ENCODE measurements at regions of chr19 and their contacts with region 1.

Region 1: GRCh38 chr19:49817964-49818648 is at the start of gene MED25:
- DNase-seq: peak; percentile 88
- H3K4me3 Mint-ChIP-seq: peak within 1 kb of the TSS; percentile 94
- H3K27ac Mint-ChIP-seq: peak within 1 kb of the TSS; percentile 93
- H3K4me1 Mint-ChIP-seq: peaks cover 25% of the 10 kb centered on the region
- H3K27me3 Mint-ChIP-seq: no peaks in the 10 kb centered on the region
- total RNA-seq, gene MED25: 54.2 and 54.5 TPM in 2 replicates

Region 2: GRCh38 chr19:49497047-49497788 is 320.9 kb before region 1 on chr19:
- intact Hi-C with region 1: loop called (anchors 5 kb)
- DNase-seq: peak; percentile 65
- H3K4me3 Mint-ChIP-seq: peak overlapping the region; percentile 91
- H3K27ac Mint-ChIP-seq: peak overlapping the region; percentile 94
- H3K4me1 Mint-ChIP-seq: peaks cover 64% of the 10 kb centered on the region
- H3K27me3 Mint-ChIP-seq: no peaks in the 10 kb centered on the region

Region 3: GRCh38 chr19:49716154-49716553 is 102.0 kb before region 1 on chr19:
- intact Hi-C with region 1: loop called (anchors 2 kb)
- DNase-seq: no peak
- H3K4me3 Mint-ChIP-seq: no peak overlapping the region
- H3K27ac Mint-ChIP-seq: no peak overlapping the region
- H3K4me1 Mint-ChIP-seq: peaks cover 7% of the 10 kb centered on the region
- H3K27me3 Mint-ChIP-seq: no peaks in the 10 kb centered on the region

Region 4: GRCh38 chr19:49786376-49786820 is 31.7 kb before region 1 on chr19:
- intact Hi-C with region 1: no loop called
- DNase-seq: no peak
- H3K4me3 Mint-ChIP-seq: no peak overlapping the region
- H3K27ac Mint-ChIP-seq: no peak overlapping the region
- H3K4me1 Mint-ChIP-seq: peaks cover under 1% of the 10 kb centered on the region
- H3K27me3 Mint-ChIP-seq: no peaks in the 10 kb centered on the region

Region 5: GRCh38 chr19:49850473-49851342 is 32.6 kb after region 1 on chr19 and contains the start of gene PTOV1:
- intact Hi-C with region 1: loop called (anchors 1 kb)
- DNase-seq: peak; percentile 88
- H3K4me3 Mint-ChIP-seq: peak within 1 kb of the TSS; percentile 89
- H3K27ac Mint-ChIP-seq: peak within 1 kb of the TSS; percentile 92
- H3K4me1 Mint-ChIP-seq: peaks cover 38% of the 10 kb centered on the region
- H3K27me3 Mint-ChIP-seq: peaks cover 5% of the 10 kb centered on the region
- total RNA-seq, gene PTOV1: 107 and 113 TPM in 2 replicates

Region 6: DNA sequence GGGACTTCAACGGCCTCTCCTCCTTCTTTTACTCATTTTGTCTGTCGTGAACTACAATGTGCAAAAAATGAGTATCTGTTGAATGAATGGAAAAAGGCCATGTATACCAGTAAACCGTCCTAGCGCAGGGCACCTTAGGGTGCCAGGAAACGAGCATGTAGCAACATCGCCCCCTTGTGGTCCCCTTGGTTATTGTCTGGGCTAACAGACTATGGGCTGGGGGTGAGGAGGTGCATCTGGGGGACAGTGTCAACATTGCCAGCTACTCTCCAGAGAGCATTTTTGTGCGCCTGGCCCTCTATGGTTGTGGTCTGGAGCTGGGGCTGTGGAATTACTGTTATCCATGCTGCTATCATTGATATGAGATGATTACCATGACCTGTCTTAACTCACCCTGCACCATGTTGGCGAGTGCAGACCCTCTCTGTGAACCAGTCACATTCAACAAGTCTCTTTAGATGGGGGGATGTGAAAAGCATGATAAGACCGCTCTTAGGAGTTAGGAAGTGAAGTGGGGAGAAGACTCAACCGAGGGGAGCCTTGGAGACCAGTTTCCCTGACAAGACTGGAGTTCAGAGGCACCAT is 165.6 kb after region 1 on chr19:
- intact Hi-C with region 1: loop called (anchors 10 kb)
- DNase-seq: peak; percentile 61
- H3K4me3 Mint-ChIP-seq: no peak overlapping the region
- H3K27ac Mint-ChIP-seq: no peak overlapping the region
- H3K4me1 Mint-ChIP-seq: peaks cover 13% of the 10 kb centered on the region
- H3K27me3 Mint-ChIP-seq: no peaks in the 10 kb centered on the region

Region 7: GRCh38 chr19:50315773-50316448 is 497.8 kb after region 1 on chr19:
- intact Hi-C with region 1: no loop called
- DNase-seq: no peak
- H3K4me3 Mint-ChIP-seq: peak overlapping the region; percentile 81
- H3K27ac Mint-ChIP-seq: peak overlapping the region; percentile 55
- H3K4me1 Mint-ChIP-seq: peaks cover 18% of the 10 kb centered on the region
- H3K27me3 Mint-ChIP-seq: peaks cover 38% of the 10 kb centered on the region

Measured in activated T-helper 1 cell treated with anti-CD3 and anti-CD28 coated beads, Interleukin-12 subunit alpha, Interleukin-12 subunit beta, Interleukin-2, Interleukin-4 antibody, amounts not matched to agents 30 ng/mL and 10 ng/mL and 1 ng/mL, durations not matched to agents 14 hours and 24 hours and 36 hours (primary cell).